B cell (primary cell): ENCODE measurements at regions of chr20 and their contacts with region 1.

Region 1: DNA sequence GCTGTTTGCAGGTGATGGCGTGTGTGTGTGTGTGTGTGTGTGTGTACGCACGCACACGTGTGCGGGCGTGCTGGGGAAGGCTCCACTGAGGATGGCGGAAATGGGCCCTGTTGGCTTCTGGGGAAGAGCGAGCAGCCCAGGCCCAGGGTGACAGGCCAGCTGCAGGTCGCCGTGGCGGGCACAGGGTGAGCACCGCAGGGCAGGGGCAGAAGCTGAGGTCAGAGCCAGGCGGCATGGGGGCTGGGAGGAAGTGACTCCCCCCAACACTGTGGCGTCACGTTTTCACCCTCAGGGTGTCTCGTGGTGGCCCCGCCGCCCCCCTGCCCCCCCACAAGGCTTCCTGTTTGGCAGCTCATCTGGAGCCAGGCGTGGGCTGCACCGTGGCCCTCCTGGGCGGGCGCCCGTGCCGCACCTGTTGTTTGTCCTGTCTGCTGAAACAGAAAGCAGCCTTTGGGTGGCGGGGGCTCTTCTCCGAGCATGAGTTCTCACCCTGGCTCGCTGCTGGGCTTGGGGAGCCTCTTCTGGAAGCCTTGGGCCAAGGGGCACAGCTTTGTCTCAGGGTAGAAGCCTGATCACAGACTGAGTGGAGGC is 7.1 kb downstream of the RBM38 start:
- DNase-seq: peak; percentile 99
- ATAC-seq: peak; percentile 72
- H3K4me3 ChIP-seq: peak overlapping the region in 4 of 5 experiments; percentile 23 to 56 (median 46)
- H3K4me3 Mint-ChIP-seq: peak overlapping the region; percentile 92
- H3K27ac ChIP-seq: peak overlapping the region; percentile 96 to 97
- H3K27ac Mint-ChIP-seq: peak overlapping the region; percentile 100
- H3K4me1 ChIP-seq: peaks cover 97 to 99% of the 10 kb centered on the region in 2 donors
- H3K4me1 Mint-ChIP-seq: peaks cover 98% of the 10 kb centered on the region
- H3K27me3 ChIP-seq: no peaks in the 10 kb centered on the region
- H3K27me3 Mint-ChIP-seq: no peaks in the 10 kb centered on the region
- CTCF ChIP-seq: no peak

Region 2: GRCh38 chr20:57412347-57413029 is 14.2 kb after region 1 on chr20:
- CTCF ChIA-PET with region 1: interaction called, 12 read pairs
- POLR2A ChIA-PET with region 1: interaction called, 4 read pairs
- intact Hi-C with region 1: no loop called
- DNase-seq: no peak
- ATAC-seq: peak; percentile 22
- H3K4me3 ChIP-seq: no peak overlapping the region
- H3K4me3 Mint-ChIP-seq: no peak overlapping the region
- H3K27ac ChIP-seq: no peak overlapping the region
- H3K27ac Mint-ChIP-seq: peak overlapping the region; percentile 5
- H3K4me1 ChIP-seq: peaks cover 0 to 8% of the 10 kb centered on the region in 2 donors
- H3K4me1 Mint-ChIP-seq: peaks cover 37% of the 10 kb centered on the region
- H3K27me3 ChIP-seq: no peaks in the 10 kb centered on the region
- H3K27me3 Mint-ChIP-seq: no peaks in the 10 kb centered on the region
- CTCF ChIP-seq: no peak

Region 3: GRCh38 chr20:57473246-57474048 is 75.1 kb after region 1 on chr20:
- CTCF ChIA-PET with region 1: interaction called, 20 read pairs
- POLR2A ChIA-PET with region 1: interaction called, 14 read pairs
- intact Hi-C with region 1: loop called (anchors 1 kb)
- DNase-seq: peak; percentile 69
- ATAC-seq: peak; percentile 52
- H3K4me3 ChIP-seq: peak overlapping the region in 2 of 5 experiments; percentile 19 to 37
- H3K4me3 Mint-ChIP-seq: peak overlapping the region; percentile 65
- H3K27ac ChIP-seq: peak overlapping the region in 1 of 2 donors; percentile 2
- H3K27ac Mint-ChIP-seq: peak overlapping the region; percentile 61
- H3K4me1 ChIP-seq: peaks cover 72 to 84% of the 10 kb centered on the region in 2 donors
- H3K4me1 Mint-ChIP-seq: peaks cover 86% of the 10 kb centered on the region
- H3K27me3 ChIP-seq: no peaks in the 10 kb centered on the region
- H3K27me3 Mint-ChIP-seq: peaks cover 4% of the 10 kb centered on the region
- CTCF ChIP-seq: no peak

Region 4: DNA sequence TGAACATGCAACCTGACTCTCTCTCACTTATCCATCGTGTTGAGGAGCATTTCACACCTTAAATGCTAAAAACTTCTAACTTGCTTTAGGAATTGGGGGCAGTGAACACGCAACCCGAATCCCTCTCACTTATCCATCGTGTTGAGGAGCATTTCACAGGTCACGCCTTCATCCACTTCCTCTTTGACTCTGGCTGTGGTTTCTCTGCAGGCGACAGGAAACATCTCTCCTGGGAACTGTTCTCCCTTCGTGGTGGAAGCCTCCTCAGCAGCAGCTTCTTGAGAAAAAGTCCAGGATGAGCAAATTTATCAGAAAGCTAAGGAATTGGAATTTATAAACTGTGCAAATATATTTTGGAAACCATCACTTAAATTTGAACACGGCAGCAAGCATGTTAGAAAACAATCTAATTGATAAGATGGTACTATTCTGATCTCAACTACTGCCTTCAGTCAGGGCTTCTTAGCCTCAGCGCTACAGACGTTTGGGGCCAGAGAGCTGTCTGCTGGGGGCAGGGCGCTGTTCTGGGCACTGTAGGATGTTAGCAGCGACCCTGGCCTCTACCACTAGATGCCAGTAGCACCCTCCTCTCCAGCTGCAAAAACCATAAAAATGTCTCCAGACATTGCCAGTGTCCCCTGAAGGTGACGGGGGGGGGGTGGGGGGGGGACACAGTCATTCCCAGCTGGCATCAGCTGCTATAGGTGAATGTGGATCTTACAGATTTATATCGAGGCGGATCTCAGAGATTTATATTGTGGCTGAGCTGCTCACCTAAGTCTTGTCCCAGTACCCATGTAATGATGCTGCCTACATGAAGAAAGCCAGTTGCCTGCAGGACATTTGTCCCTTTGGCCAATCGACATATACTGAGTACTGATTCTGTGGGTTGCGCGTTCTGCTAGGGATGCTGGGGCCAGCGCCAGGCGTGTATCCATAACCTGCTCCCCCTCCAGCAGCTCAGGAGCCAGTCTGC is 100.4 kb after region 1 on chr20:
- CTCF ChIA-PET with region 1: interaction called, 37 read pairs
- POLR2A ChIA-PET with region 1: interaction called, 9 read pairs
- intact Hi-C with region 1: no loop called
- DNase-seq: peak; percentile 67
- ATAC-seq: peak; percentile 70
- H3K4me3 ChIP-seq: no peak overlapping the region
- H3K4me3 Mint-ChIP-seq: no peak overlapping the region
- H3K27ac ChIP-seq: no peak overlapping the region
- H3K27ac Mint-ChIP-seq: no peak overlapping the region
- H3K4me1 ChIP-seq: peaks cover 30 to 39% of the 10 kb centered on the region in 2 donors
- H3K4me1 Mint-ChIP-seq: peaks cover 44% of the 10 kb centered on the region
- H3K27me3 ChIP-seq: peaks cover 0 to 3% (median 0%) of the 10 kb centered on the region in 4 experiments
- H3K27me3 Mint-ChIP-seq: peaks cover 9% of the 10 kb centered on the region
- CTCF ChIP-seq: peak; percentile 70

Region 5: GRCh38 chr20:57698117-57698866 is 300.0 kb after region 1 on chr20:
- CTCF ChIA-PET with region 1: no interaction called
- POLR2A ChIA-PET with region 1: no interaction called
- intact Hi-C with region 1: loop called (anchors 5 kb)
- DNase-seq: no peak
- ATAC-seq: no peak
- H3K4me3 ChIP-seq: peak overlapping the region in 1 of 5 experiments; percentile 44
- H3K4me3 Mint-ChIP-seq: peak overlapping the region; percentile 79
- H3K27ac ChIP-seq: no peak overlapping the region
- H3K27ac Mint-ChIP-seq: peak overlapping the region; percentile 13
- H3K4me1 ChIP-seq: peaks cover 97 to 99% of the 10 kb centered on the region in 2 donors
- H3K4me1 Mint-ChIP-seq: peaks cover 95% of the 10 kb centered on the region
- H3K27me3 ChIP-seq: no peaks in the 10 kb centered on the region
- H3K27me3 Mint-ChIP-seq: no peaks in the 10 kb centered on the region
- CTCF ChIP-seq: no peak